Heart left ventricle (tissue), 16 donors: ENCODE measurements at regions of chr2 and their contacts with region 1.

Region 1: GRCh38 chr2:181886192-181886591 is 5.3 kb upstream of the ITPRID2 start:
- DNase-seq: no peak
- ATAC-seq: no peak
- H3K4me3 ChIP-seq: no peak overlapping the region
- H3K27ac ChIP-seq: no peak overlapping the region
- H3K4me1 ChIP-seq: peaks cover 0 to 18% (median 6%) of the 10 kb centered on the region in 12 donors
- H3K27me3 ChIP-seq: no peaks in the 10 kb centered on the region
- CTCF ChIP-seq: no peak
- POLR2A ChIP-seq: no peak

Region 2: GRCh38 chr2:181677912-181678586 is 208.1 kb before region 1 on chr2:
- intact Hi-C with region 1: no loop called
- DNase-seq: peak; percentile 45 to 71 (median 65)
- ATAC-seq: peak; percentile 61 to 86 (median 82)
- H3K4me3 ChIP-seq: no peak overlapping the region
- H3K27ac ChIP-seq: no peak overlapping the region
- H3K4me1 ChIP-seq: peaks cover 0 to 22% (median under 1%) of the 10 kb centered on the region in 12 donors
- H3K27me3 ChIP-seq: peaks cover 34 to 93% (median 60%) of the 10 kb centered on the region in 9 donors
- CTCF ChIP-seq: no peak
- POLR2A ChIP-seq: no peak

Region 3: GRCh38 chr2:181810823-181811695 is 75.1 kb before region 1 on chr2:
- intact Hi-C with region 1: loop called in 3 of 10 experiments (anchors 5 to 10 kb)
- DNase-seq: peak in 3 of 5 donors; percentile 27 to 40 (median 36)
- ATAC-seq: peak; percentile 69 to 95 (median 91)
- H3K4me3 ChIP-seq: peak overlapping the region in 3 of 12 donors; percentile 7 to 17 (median 11)
- H3K27ac ChIP-seq: peak overlapping the region in 10 of 12 donors; percentile 8 to 65 (median 42)
- H3K4me1 ChIP-seq: peaks cover 0 to 32% (median 9%) of the 10 kb centered on the region in 12 donors
- H3K27me3 ChIP-seq: no peaks in the 10 kb centered on the region
- CTCF ChIP-seq: no peak
- POLR2A ChIP-seq: no peak

Region 4: GRCh38 chr2:181937473-181937872 is 51.3 kb after region 1 on chr2:
- intact Hi-C with region 1: no loop called
- DNase-seq: no peak
- ATAC-seq: peak in 2 of 4 donors; percentile 72 to 82
- H3K4me3 ChIP-seq: no peak overlapping the region
- H3K27ac ChIP-seq: peak overlapping the region in 1 of 12 donors; percentile 15
- H3K4me1 ChIP-seq: peaks cover 0 to 8% (median 0%) of the 10 kb centered on the region in 12 donors
- H3K27me3 ChIP-seq: no peaks in the 10 kb centered on the region
- CTCF ChIP-seq: no peak
- POLR2A ChIP-seq: no peak

Region 5: GRCh38 chr2:182088681-182089320 is 202.6 kb after region 1 on chr2:
- intact Hi-C with region 1: no loop called
- DNase-seq: no peak
- ATAC-seq: peak in 1 of 4 donors; percentile 45
- H3K4me3 ChIP-seq: no peak overlapping the region
- H3K27ac ChIP-seq: no peak overlapping the region
- H3K4me1 ChIP-seq: peaks cover 0 to 31% (median 5%) of the 10 kb centered on the region in 12 donors
- H3K27me3 ChIP-seq: no peaks in the 10 kb centered on the region
- CTCF ChIP-seq: no peak
- POLR2A ChIP-seq: no peak